Transverse colon (tissue), 4 donors: ENCODE measurements at regions of chr2 and their contacts with region 1.

Region 1: GRCh38 chr2:27086090-27086723 is 365 bp upstream of the KHK start:
- DNase-seq: peak; percentile 97
- H3K4me3 ChIP-seq: peak overlapping the region; percentile 35 to 72 (median 52)
- H3K27ac ChIP-seq: peak overlapping the region; percentile 92 to 94 (median 92)
- H3K4me1 ChIP-seq: peaks cover 25 to 51% (median 35%) of the 10 kb centered on the region in 4 donors
- H3K27me3 ChIP-seq: no peaks in the 10 kb centered on the region
- CTCF ChIP-seq: peak; percentile 52 to 95 (median 89)
- EP300 ChIP-seq: no peak
- POLR2A ChIP-seq: peak; percentile 75

Region 2: GRCh38 chr2:26988058-26988860 is 97.9 kb before region 1 on chr2:
- in situ Hi-C with region 1: no loop called
- intact Hi-C with region 1: no loop called
- DNase-seq: no peak
- H3K4me3 ChIP-seq: no peak overlapping the region
- H3K27ac ChIP-seq: no peak overlapping the region
- H3K4me1 ChIP-seq: peaks cover 0 to 3% (median 0%) of the 10 kb centered on the region in 4 donors
- H3K27me3 ChIP-seq: no peaks in the 10 kb centered on the region
- CTCF ChIP-seq: no peak
- EP300 ChIP-seq: no peak
- POLR2A ChIP-seq: no peak

Region 3: GRCh38 chr2:27032495-27033252 is 53.5 kb before region 1 on chr2 and contains the start of gene TMEM214:
- in situ Hi-C with region 1: no loop called
- intact Hi-C with region 1: loop called (anchors 5 kb)
- DNase-seq: peak; percentile 92
- H3K4me3 ChIP-seq: peak within 1 kb of the TSS; percentile 78 to 91 (median 81)
- H3K27ac ChIP-seq: peak within 1 kb of the TSS; percentile 85 to 91 (median 86)
- H3K4me1 ChIP-seq: peaks cover 12 to 23% (median 20%) of the 10 kb centered on the region in 4 donors
- H3K27me3 ChIP-seq: no peaks in the 10 kb centered on the region
- CTCF ChIP-seq: peak in 3 of 5 experiments; percentile 8 to 44 (median 41)
- EP300 ChIP-seq: no peak
- POLR2A ChIP-seq: peak; percentile 77
- total RNA-seq, gene TMEM214: 51.2 to 179 (median 127) TPM

Region 4: DNA sequence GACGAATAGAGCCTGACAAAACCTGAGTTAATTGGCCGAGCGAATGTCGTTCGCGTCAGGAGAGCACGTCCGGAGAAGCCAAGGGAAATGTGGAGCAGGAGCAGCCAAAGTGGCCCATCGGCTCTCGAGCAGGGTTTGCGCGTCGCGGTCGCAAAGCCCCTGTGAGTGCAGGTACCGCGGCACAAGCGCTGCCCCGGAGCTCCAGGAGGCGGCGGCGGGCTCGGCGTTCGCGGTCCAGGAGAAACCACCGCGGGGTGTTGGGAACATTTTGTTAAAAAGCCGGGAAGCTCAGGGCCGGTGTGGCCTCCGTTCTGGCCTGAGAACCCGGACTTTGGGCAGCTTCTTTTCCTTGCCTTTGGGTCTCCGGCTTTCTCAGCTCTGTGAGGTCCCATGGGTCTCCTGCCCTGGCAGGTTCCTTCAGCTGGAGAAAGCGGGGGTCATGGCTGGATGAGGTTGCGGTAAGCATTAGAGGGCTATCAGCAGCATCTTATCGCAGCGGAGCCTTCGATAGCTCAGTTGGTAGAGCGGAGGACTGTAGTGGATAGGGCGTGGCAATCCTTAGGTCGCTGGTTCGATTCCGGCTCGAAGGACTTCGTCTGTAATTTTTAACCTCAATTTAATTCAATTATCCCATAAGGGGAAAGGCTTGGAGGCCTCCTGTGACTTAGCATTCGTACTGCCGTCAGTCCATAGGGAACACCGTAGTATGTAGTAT is 35.8 kb before region 1 on chr2:
- in situ Hi-C with region 1: no loop called
- intact Hi-C with region 1: loop called (anchors 5 kb)
- DNase-seq: peak; percentile 95
- H3K4me3 ChIP-seq: peak overlapping the region; percentile 33 to 97 (median 86)
- H3K27ac ChIP-seq: peak overlapping the region; percentile 85 to 93 (median 88)
- H3K4me1 ChIP-seq: peaks cover 7 to 18% (median 16%) of the 10 kb centered on the region in 4 donors
- H3K27me3 ChIP-seq: no peaks in the 10 kb centered on the region
- CTCF ChIP-seq: peak; percentile 38 to 85 (median 54)
- EP300 ChIP-seq: no peak
- POLR2A ChIP-seq: no peak